ENCODE measurements at regions of chr10 and their contacts with region 1.

Region 1: DNA sequence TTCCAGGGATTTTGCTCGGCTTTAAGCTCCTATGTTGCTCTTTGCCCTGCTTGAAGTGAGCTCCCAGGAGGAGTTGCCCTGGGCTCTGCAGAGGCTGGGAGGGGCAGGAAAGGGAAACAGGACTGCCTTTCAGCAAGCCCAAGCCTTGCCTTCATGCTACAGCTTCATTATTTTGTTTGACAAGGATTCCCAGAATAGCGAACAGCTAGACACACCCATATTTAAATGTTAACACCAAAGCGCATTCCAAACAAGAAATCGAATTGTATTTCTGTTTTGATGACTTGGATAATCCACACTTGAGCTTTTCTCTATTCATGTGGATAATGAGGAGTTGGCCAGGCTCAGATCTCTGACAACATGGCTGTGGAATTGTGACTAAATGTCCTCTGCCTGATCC is 6.3 kb downstream of the KIAA1217 start:
- DNase-seq: no peak
- ATAC-seq: peak; percentile 48

Region 2: GRCh38 chr10:24255881-24256311 is 40.7 kb after region 1 on chr10:
- intact Hi-C with region 1: loop called (anchors 5 kb)
- DNase-seq: peak; percentile 66
- ATAC-seq: peak; percentile 83

Measured in Right ventricle myocardium inferior (tissue), 1 donor.